ENCODE measurements at regions of chr16 and their contacts with region 1.

Region 1: GRCh38 chr16:66406534-66407221 is 20.4 kb upstream of the BEAN1 start:
- DNase-seq: peak; percentile 66 to 77 (median 76)
- H3K4me3 ChIP-seq: peak overlapping the region; percentile 43 to 80 (median 44)
- H3K4me3 Mint-ChIP-seq: peak overlapping the region; percentile 79 to 91
- H3K27ac ChIP-seq: no peak overlapping the region
- H3K27ac Mint-ChIP-seq: peak overlapping the region in 2 of 7 donors; percentile 2 to 43
- H3K4me1 ChIP-seq: peaks cover 18 to 19% of the 10 kb centered on the region in 2 donors
- H3K4me1 Mint-ChIP-seq: peaks cover 21% of the 10 kb centered on the region
- H3K27me3 ChIP-seq: peaks cover 0 to 5% of the 10 kb centered on the region in 2 donors
- H3K27me3 Mint-ChIP-seq: peaks cover 7 to 13% (median 11%) of the 10 kb centered on the region in 3 donors
- CTCF ChIP-seq: peak; percentile 93

Region 2: DNA sequence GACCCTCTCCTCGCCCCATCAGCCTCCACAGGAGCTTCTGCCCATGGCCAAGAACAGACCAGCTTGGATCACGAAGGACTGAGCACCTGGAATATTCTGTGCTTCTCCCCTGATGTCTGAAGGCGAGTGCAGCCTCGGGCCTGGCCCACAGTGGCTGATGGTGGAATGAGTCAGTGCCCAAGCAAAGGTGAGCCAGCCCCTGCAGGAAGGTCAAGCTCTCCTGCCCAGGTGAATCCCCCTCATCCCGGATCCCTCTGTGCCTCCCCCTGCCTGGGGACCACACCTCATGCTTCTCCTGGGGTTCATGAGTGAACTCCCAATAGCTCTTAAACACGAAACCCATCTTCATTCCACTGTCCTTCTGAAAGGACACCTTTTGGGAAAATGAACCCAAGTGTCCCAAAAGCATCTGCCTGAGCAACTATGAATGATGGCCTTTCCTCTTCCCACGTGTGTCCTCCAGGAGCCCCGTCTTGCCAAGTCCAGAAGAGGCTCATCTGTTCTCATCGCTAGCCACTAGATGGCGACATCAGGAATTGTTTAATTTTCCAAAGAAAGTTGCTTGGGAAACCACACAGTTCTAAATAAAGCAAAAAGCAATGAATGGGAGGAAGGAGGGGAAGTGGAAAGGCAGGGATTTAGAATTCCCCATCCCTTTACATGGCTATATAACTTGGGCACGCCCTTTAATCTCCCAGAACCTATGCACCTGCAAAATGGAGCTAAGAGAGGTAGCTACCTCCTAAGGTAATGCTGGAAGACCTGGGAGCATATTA is 49.3 kb before region 1 on chr16:
- intact Hi-C with region 1: no loop called
- DNase-seq: peak in 2 of 3 donors; percentile 52 to 57
- H3K4me3 ChIP-seq: no peak overlapping the region
- H3K4me3 Mint-ChIP-seq: no peak overlapping the region
- H3K27ac ChIP-seq: no peak overlapping the region
- H3K27ac Mint-ChIP-seq: peak overlapping the region in 1 of 7 donors; percentile 40
- H3K4me1 ChIP-seq: peaks cover 20 to 24% of the 10 kb centered on the region in 2 donors
- H3K4me1 Mint-ChIP-seq: peaks cover 44% of the 10 kb centered on the region
- H3K27me3 ChIP-seq: peaks cover 0 to 3% of the 10 kb centered on the region in 2 donors
- H3K27me3 Mint-ChIP-seq: peaks cover 10 to 22% (median 15%) of the 10 kb centered on the region in 3 donors
- CTCF ChIP-seq: peak; percentile 84

Region 3: DNA sequence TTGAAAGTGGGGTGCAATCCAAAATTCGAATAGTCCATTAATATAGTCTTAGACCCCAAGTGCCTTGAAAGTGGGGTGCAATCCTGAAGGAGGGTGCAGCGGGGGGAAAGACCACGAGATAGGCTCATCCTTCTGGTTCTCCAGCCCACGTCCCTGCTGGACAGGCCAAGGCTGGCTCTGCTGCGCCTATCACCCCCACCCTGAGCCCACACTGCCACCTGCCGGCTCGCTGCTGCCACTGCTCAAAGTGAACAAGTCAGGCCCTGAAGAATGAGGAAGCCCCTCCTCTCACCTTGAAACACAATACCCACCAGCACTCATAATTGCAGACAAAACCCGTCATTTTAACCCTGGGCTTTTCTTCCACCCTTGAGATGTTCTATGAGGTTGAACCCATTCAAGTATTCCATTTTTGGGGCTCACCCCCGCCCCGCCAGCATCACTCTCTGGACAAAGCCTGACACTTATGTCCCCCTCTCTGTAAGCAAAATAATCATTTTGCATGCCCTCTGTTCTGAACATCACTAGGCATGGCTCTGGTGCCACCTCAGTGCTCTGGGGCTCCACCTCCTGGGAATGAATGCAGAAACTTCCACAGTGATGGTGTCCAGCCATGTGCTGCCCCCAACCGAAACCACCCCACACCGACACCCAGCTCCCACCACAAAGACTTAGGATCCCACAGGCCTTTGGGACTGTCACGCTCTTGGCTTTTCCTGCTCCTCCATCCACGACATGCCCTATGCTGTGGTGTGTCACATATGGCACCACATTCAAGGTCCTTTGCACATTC is 77.2 kb after region 1 on chr16:
- intact Hi-C with region 1: loop called (anchors 5 kb)
- DNase-seq: peak; percentile 69 to 79 (median 77)
- H3K4me3 ChIP-seq: no peak overlapping the region
- H3K4me3 Mint-ChIP-seq: no peak overlapping the region
- H3K27ac ChIP-seq: no peak overlapping the region
- H3K27ac Mint-ChIP-seq: peak overlapping the region in 3 of 7 donors; percentile 33 to 57 (median 54)
- H3K4me1 ChIP-seq: peaks cover 58 to 69% of the 10 kb centered on the region in 2 donors
- H3K4me1 Mint-ChIP-seq: peaks cover 63% of the 10 kb centered on the region
- H3K27me3 ChIP-seq: no peaks in the 10 kb centered on the region
- H3K27me3 Mint-ChIP-seq: peaks cover 2 to 4% (median 3%) of the 10 kb centered on the region in 3 donors
- CTCF ChIP-seq: peak; percentile 94

Region 4: DNA sequence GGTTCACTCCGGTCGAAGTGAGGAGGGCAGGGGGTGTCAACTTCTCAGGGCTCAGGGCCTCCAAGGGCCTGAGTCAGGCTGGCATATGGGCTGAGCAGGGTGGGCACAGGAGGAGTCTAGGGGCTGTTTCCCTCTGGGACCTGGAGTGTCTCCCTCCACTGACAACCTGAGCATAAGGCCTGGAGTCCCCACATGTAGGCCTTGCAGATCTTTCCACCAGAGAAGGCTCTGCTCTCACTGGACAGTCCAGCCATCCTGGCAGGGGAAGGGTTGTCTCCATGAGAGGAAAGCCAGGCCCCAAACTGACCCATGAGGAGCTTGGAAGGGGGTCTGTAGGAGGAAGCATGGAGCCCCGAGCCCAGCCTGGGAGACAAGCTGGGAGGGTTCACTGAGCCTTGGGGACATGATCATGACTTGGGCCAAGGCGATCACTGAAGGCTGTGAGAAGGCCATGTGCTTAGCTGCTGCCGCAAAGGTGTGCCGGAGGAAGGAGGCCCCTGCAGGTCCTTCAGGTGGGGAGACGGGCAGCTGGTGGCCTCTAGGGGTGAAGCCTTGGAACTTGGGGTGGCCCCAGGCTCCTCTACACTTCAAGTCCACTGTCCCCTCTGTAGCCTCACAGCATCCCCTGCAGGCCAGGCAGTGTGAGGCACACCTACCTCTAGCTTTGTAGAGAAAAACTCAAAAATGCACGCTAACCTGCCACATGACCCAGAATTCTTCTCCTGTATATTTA is 182.5 kb after region 1 on chr16:
- intact Hi-C with region 1: loop called (anchors 5 kb)
- DNase-seq: peak; percentile 68 to 83 (median 77)
- H3K4me3 ChIP-seq: no peak overlapping the region
- H3K4me3 Mint-ChIP-seq: peak overlapping the region in 1 of 2 donors; percentile 61
- H3K27ac ChIP-seq: peak overlapping the region in 1 of 2 donors; percentile 40
- H3K27ac Mint-ChIP-seq: peak overlapping the region in 3 of 7 donors; percentile 44 to 64 (median 46)
- H3K4me1 ChIP-seq: peaks cover 67 to 73% of the 10 kb centered on the region in 2 donors
- H3K4me1 Mint-ChIP-seq: peaks cover 68% of the 10 kb centered on the region
- H3K27me3 ChIP-seq: no peaks in the 10 kb centered on the region
- H3K27me3 Mint-ChIP-seq: peaks cover 0 to 6% (median 3%) of the 10 kb centered on the region in 3 donors
- CTCF ChIP-seq: peak; percentile 97

Region 5: DNA sequence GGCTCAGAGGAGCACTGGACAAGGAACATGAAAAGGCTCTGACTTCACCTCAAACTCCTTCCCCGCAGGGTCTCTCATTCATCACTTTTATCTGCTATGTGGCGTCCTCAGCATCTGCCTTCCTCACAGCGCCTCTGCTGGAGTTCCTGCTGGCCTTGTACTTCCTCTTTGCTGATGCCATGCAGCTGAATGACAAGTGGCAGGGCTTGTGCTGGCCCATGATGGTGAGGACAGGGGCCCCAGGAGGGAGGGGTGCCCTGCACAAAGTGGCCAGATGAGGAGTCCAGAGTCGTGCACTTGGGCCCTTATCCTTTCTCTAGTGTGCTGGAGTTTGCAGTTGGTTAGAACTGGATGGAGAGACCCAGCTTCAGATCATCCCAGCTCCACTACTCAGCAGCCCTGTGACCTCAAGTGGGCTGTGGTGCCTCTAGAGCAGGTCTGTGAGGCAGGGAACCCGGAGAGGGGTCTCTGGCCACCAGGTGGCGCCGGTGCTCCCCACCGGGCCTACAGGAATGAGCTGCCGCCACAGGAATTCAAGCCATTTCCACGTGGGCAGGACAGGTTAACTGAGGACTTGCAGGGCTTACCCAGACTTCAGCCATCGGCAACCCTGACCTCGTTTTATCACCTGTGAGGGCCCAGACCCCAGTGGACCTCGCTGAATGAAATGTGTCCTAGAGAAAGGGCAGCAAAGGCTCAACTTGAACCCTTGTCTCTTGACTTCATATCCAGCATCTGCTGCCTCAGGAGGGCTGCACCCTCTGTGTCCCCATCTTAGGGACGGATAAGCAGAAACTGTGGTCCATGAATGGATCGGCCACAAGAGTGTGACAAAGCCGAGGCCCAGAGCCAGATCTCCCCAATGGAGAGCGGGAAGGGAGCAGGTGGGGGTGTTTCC is 201.8 kb after region 1 on chr16:
- intact Hi-C with region 1: loop called (anchors 2 to 5 kb)
- DNase-seq: peak; percentile 47 to 68 (median 65)
- H3K4me3 ChIP-seq: peak overlapping the region in 1 of 3 experiments; percentile 11
- H3K4me3 Mint-ChIP-seq: peak overlapping the region in 1 of 2 donors; percentile 16
- H3K27ac ChIP-seq: peak overlapping the region; percentile 39 to 40
- H3K27ac Mint-ChIP-seq: peak overlapping the region; percentile 21 to 87 (median 71)
- H3K4me1 ChIP-seq: peaks cover 42 to 45% of the 10 kb centered on the region in 2 donors
- H3K4me1 Mint-ChIP-seq: peaks cover 41% of the 10 kb centered on the region
- H3K27me3 ChIP-seq: no peaks in the 10 kb centered on the region
- H3K27me3 Mint-ChIP-seq: peaks cover 6 to 9% (median 7%) of the 10 kb centered on the region in 3 donors
- CTCF ChIP-seq: peak; percentile 72

Region 6: GRCh38 chr16:66740010-66740409 is 333.3 kb after region 1 on chr16:
- intact Hi-C with region 1: loop called in 1 of 2 experiments (anchors 10 kb)
- DNase-seq: peak in 2 of 3 donors; percentile 23 to 42
- H3K4me3 ChIP-seq: peak overlapping the region in 1 of 3 experiments; percentile 35
- H3K4me3 Mint-ChIP-seq: peak overlapping the region; percentile 12 to 83
- H3K27ac ChIP-seq: peak overlapping the region; percentile 38 to 70
- H3K27ac Mint-ChIP-seq: peak overlapping the region; percentile 35 to 91 (median 85)
- H3K4me1 ChIP-seq: peaks cover 43 to 45% of the 10 kb centered on the region in 2 donors
- H3K4me1 Mint-ChIP-seq: peaks cover 40% of the 10 kb centered on the region
- H3K27me3 ChIP-seq: no peaks in the 10 kb centered on the region
- H3K27me3 Mint-ChIP-seq: no peaks in the 10 kb centered on the region
- CTCF ChIP-seq: peak; percentile 77

Region 7: GRCh38 chr16:66869424-66869823 is 462.7 kb after region 1 on chr16:
- intact Hi-C with region 1: loop called (anchors 5 kb)
- DNase-seq: no peak
- H3K4me3 ChIP-seq: no peak overlapping the region
- H3K4me3 Mint-ChIP-seq: no peak overlapping the region
- H3K27ac ChIP-seq: no peak overlapping the region
- H3K27ac Mint-ChIP-seq: no peak overlapping the region
- H3K4me1 ChIP-seq: peaks cover 14 to 20% of the 10 kb centered on the region in 2 donors
- H3K4me1 Mint-ChIP-seq: peaks cover 15% of the 10 kb centered on the region
- H3K27me3 ChIP-seq: peaks cover 0 to 23% of the 10 kb centered on the region in 2 donors
- H3K27me3 Mint-ChIP-seq: peaks cover 29 to 55% (median 34%) of the 10 kb centered on the region in 3 donors
- CTCF ChIP-seq: no peak

Measured in CD14-positive monocyte (primary cell).